CD8-positive, alpha-beta T cell (primary cell): ENCODE measurements at regions of chr5 and their contacts with region 1.

Region 1: DNA sequence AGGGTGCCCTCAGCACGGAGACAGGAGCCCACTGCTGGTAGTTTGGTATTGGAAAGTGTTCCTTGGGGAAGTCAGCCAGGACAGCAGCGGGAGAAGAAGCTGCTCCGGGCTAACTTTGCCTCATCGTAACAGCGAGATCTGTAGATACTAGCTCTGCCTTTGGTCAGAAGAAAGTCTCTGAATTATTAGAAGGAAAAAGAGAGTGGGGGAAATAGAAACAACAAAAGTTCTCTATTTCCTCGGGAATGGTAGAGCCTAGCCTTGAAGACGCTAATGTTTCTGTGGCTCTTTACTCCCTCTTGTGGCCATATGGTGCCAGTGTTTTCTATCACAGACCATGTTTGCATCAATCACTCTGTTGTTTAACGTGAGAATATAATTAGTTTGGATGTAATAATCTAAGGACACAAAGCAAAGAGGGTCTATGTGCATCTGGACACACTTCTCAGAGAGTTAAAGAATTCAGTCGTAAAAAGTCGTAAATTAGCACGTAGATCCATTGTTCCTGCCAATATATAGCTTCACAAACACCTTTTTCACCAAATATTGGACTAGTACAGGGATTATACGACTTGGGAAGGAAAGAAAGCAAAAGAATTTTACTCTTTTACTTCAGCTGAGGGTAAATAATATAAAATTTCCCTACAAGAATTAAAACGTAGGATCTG is 40.2 kb upstream of the HSD17B4 start:
- DNase-seq: peak in 8 of 9 experiments; percentile 27 to 85 (median 57)
- ATAC-seq: peak; percentile 88
- H3K4me3 ChIP-seq: peak overlapping the region; percentile 43 to 49
- H3K4me3 Mint-ChIP-seq: peak overlapping the region; percentile 86
- H3K27ac ChIP-seq: no peak overlapping the region
- H3K27ac Mint-ChIP-seq: peak overlapping the region; percentile 74
- H3K4me1 ChIP-seq: peaks cover 5% of the 10 kb centered on the region
- H3K4me1 Mint-ChIP-seq: peaks cover 16% of the 10 kb centered on the region
- H3K27me3 ChIP-seq: no peaks in the 10 kb centered on the region
- H3K27me3 Mint-ChIP-seq: no peaks in the 10 kb centered on the region
- CTCF ChIP-seq: peak; percentile 89

Region 2: DNA sequence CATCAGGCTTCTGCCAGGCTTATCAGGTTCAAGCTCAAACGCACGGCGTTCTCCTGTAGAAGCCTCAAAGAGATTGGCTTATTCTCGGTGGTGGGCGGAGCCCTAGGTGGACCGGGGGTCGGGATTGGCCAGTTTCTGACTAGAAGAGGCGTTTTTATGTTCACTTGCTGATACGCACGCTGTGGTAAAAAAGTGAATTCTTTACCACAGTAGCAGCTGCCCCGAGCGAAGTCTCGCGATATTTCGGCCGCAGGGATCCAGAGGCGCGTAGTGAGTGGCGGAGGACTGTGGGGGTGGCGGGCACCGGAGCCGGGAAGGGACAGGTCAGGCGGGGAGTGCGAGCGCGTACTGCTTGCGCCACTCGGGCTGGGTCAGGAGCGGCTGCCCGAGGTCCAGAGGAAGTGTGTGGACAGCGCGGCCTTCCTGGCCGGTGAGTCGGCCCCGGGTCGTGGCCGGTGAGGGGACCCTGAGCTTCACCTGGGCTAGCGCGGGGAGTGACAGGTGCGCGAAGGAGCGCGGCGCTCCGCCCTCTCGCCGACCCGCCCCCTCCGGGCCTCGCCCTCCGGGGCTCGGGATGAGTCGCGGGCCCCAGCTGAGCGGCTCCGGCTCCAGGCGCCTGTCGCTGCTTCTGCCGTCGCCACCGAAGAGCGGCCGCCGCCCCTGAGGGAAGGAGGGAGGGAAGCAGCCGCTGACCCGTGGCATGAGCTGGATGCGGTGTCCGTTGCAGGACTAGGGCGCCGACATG is 341.1 kb before region 1 on chr5 and contains the start of gene DMXL1:
- CTCF ChIA-PET with region 1: interaction called, 14 read pairs
- POLR2A ChIA-PET with region 1: interaction called, 3 read pairs
- intact Hi-C with region 1: loop called (anchors 2 to 5 kb)
- DNase-seq: peak; percentile 95 to 99 (median 98)
- ATAC-seq: peak; percentile 83
- H3K4me3 ChIP-seq: peak within 1 kb of the TSS; percentile 69 to 79
- H3K4me3 Mint-ChIP-seq: peak within 1 kb of the TSS; percentile 100
- H3K27ac ChIP-seq: peak within 1 kb of the TSS; percentile 92 to 93
- H3K27ac Mint-ChIP-seq: peak within 1 kb of the TSS; percentile 100
- H3K4me1 ChIP-seq: peaks cover 25% of the 10 kb centered on the region
- H3K4me1 Mint-ChIP-seq: peaks cover 42% of the 10 kb centered on the region
- H3K27me3 ChIP-seq: no peaks in the 10 kb centered on the region
- H3K27me3 Mint-ChIP-seq: no peaks in the 10 kb centered on the region
- CTCF ChIP-seq: no peak
- total RNA-seq, gene DMXL1: 28.7 to 32.4 TPM

Region 3: DNA sequence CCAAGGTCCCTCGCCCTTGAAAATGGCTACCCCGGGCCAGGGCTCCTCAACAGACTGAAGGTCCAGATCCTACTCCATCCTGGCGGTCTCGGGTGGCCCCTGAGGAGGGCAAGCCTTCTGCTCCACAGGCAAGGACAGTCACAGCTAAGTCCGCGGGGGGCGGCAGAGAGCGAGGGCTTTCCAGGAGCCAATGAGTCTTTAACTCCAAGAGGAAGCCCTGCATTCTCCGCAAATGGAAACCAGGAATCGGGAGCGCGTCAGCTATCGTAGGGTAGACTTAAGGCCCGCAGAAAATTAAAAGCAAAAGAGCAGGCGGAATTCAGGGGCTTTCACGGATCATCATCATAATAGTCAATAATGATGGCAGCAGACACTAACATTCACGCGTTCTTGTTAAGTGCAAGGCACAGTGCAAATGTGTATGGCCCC is 144.1 kb before region 1 on chr5:
- CTCF ChIA-PET with region 1: interaction called, 33 read pairs
- POLR2A ChIA-PET with region 1: interaction called, 5 read pairs
- intact Hi-C with region 1: loop called (anchors 1 to 2 kb)
- DNase-seq: peak; percentile 39 to 95 (median 81)
- ATAC-seq: peak; percentile 76
- H3K4me3 ChIP-seq: peak overlapping the region; percentile 93 to 96
- H3K4me3 Mint-ChIP-seq: peak overlapping the region; percentile 100
- H3K27ac ChIP-seq: peak overlapping the region; percentile 79 to 89
- H3K27ac Mint-ChIP-seq: peak overlapping the region; percentile 99
- H3K4me1 ChIP-seq: peaks cover 45% of the 10 kb centered on the region
- H3K4me1 Mint-ChIP-seq: peaks cover 75% of the 10 kb centered on the region
- H3K27me3 ChIP-seq: no peaks in the 10 kb centered on the region
- H3K27me3 Mint-ChIP-seq: no peaks in the 10 kb centered on the region
- CTCF ChIP-seq: peak; percentile 79

Region 4: GRCh38 chr5:119315516-119315949 is 96.5 kb before region 1 on chr5:
- CTCF ChIA-PET with region 1: interaction called, 118 read pairs
- POLR2A ChIA-PET with region 1: interaction called, 7 read pairs
- intact Hi-C with region 1: loop called (anchors 1 kb)
- DNase-seq: peak in 7 of 9 experiments; percentile 41 to 86 (median 69)
- ATAC-seq: peak; percentile 87
- H3K4me3 ChIP-seq: no peak overlapping the region
- H3K4me3 Mint-ChIP-seq: peak overlapping the region; percentile 37
- H3K27ac ChIP-seq: peak overlapping the region; percentile 25 to 62
- H3K27ac Mint-ChIP-seq: peak overlapping the region; percentile 91
- H3K4me1 ChIP-seq: peaks cover 94% of the 10 kb centered on the region
- H3K4me1 Mint-ChIP-seq: peaks cover 92% of the 10 kb centered on the region
- H3K27me3 ChIP-seq: no peaks in the 10 kb centered on the region
- H3K27me3 Mint-ChIP-seq: no peaks in the 10 kb centered on the region
- CTCF ChIP-seq: peak; percentile 74

Region 5: DNA sequence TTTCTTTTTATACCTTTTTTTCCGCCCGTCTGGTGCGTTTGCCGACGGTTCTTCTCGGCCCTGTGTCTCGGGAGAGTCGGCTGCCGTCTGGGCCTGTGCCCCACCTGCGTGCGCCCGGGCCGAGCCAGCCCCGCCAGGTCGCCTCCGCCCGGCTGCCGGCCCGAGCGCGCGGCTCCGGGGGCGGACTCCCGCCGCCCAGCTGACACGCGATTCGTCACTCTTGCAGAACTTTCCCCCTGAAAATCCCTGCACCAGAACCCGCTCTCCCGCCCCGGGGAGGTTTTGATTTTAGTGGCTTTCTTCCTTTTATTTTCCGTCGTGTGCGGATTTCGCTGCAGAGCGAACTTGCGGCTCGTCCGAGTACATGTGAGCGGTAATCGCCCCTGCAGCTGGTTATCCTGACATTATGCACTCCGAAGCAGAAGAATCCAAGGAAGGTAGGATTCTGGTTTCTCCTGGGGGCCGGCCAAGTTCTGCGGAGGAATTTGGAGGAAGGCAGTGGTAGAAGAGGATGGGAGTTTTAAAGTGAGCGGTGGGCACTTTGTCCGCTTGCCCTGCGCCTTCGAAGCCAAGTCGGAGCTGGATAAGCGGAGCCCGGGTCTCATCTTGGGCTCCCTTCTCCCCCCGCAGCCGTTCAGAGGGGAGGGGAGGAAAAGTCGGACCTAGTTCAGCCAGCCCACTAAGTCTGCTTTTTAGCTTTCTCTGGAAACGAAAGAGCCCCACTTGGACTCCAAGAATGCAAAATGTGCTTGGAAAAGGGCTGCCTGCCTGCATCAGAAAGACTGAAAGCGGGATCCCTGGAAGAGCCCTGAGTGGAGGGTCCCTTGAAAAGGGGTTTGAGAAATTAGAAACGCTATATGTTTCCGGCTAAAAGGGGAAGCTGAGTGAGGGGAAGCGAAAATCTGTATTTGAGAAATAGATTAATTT is 56.1 kb before region 1 on chr5 and contains the start of gene TNFAIP8:
- CTCF ChIA-PET with region 1: interaction called, 10 read pairs
- POLR2A ChIA-PET with region 1: interaction called, 3 read pairs
- intact Hi-C with region 1: no loop called
- DNase-seq: peak in 6 of 9 experiments; percentile 43 to 76 (median 55)
- ATAC-seq: peak; percentile 37
- H3K4me3 ChIP-seq: peak within 1 kb of the TSS; percentile 38 to 52
- H3K4me3 Mint-ChIP-seq: peak within 1 kb of the TSS; percentile 88
- H3K27ac ChIP-seq: peak within 1 kb of the TSS in 1 of 2 experiments; percentile 62
- H3K27ac Mint-ChIP-seq: peak within 1 kb of the TSS; percentile 95
- H3K4me1 ChIP-seq: peaks cover 84% of the 10 kb centered on the region
- H3K4me1 Mint-ChIP-seq: peaks cover 91% of the 10 kb centered on the region
- H3K27me3 ChIP-seq: no peaks in the 10 kb centered on the region
- H3K27me3 Mint-ChIP-seq: no peaks in the 10 kb centered on the region
- CTCF ChIP-seq: no peak
- total RNA-seq, gene TNFAIP8: 62.3 to 63.0 TPM

Region 6: GRCh38 chr5:119435436-119436132 is 23.5 kb after region 1 on chr5:
- CTCF ChIA-PET with region 1: interaction called, 28 read pairs
- POLR2A ChIA-PET with region 1: no interaction called
- intact Hi-C with region 1: loop called in 1 of 2 experiments (anchors 1 kb)
- DNase-seq: peak; percentile 50 to 83 (median 74)
- ATAC-seq: peak; percentile 84
- H3K4me3 ChIP-seq: no peak overlapping the region
- H3K4me3 Mint-ChIP-seq: no peak overlapping the region
- H3K27ac ChIP-seq: no peak overlapping the region
- H3K27ac Mint-ChIP-seq: no peak overlapping the region
- H3K4me1 ChIP-seq: peaks cover 3% of the 10 kb centered on the region
- H3K4me1 Mint-ChIP-seq: peaks cover 8% of the 10 kb centered on the region
- H3K27me3 ChIP-seq: no peaks in the 10 kb centered on the region
- H3K27me3 Mint-ChIP-seq: peaks cover 13% of the 10 kb centered on the region
- CTCF ChIP-seq: peak; percentile 64